Dendritic cell treated with granulocyte-macrophage colony-stimulating factor and Interleukin-4, amounts not matched to agents 40 ng/mL and 50 ng/mL, for 4 days (primary cell): ENCODE measurements at regions of chr18 and their contacts with region 1.

Region 1: DNA sequence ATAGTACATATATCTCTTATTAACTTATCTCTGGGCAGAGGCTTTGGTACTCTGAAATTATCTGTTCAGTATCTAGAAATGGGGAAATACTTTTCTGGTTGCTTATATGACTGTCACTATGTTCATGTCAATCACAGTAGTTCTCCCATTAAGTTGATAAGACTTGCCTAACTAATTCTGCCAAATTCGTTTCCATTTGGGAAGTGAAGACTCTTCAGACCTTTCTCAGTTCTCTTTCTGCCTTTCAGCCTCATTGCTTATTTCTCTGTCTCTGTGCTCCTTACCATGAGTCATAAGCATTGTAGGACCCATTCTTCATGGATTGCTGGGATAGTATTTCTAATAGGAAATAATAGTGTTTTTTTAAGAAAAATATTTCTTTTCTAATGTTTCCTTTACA is 113.5 kb downstream of the PHLPP1 start:
- H3K4me3 Mint-ChIP-seq: no peak overlapping the region
- H3K27ac Mint-ChIP-seq: peak overlapping the region; percentile 79
- H3K4me1 Mint-ChIP-seq: peaks cover 26% of the 10 kb centered on the region
- H3K27me3 Mint-ChIP-seq: no peaks in the 10 kb centered on the region

Region 2: DNA sequence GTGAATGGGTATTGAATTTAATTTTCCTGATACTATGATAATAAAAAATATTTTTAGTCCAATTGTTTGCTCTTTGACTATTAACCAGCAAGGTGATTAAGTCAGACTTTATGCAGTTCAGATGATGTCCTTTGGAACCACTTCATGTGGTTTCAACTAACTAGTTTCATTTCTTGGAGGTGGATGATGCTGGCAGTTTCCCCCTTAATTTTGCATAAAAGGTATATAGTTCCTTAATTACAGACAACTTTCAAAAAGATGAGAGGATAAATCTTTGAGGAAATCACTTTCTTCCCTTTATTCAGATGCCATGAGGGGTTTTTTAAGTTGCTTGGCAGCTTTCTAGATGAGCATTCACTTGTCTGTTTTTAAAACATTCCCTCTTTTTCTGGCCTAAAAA is 109.6 kb after region 1 on chr18:
- intact Hi-C with region 1: loop called (anchors 10 kb)
- H3K4me3 Mint-ChIP-seq: no peak overlapping the region
- H3K27ac Mint-ChIP-seq: no peak overlapping the region
- H3K4me1 Mint-ChIP-seq: peaks cover 42% of the 10 kb centered on the region
- H3K27me3 Mint-ChIP-seq: no peaks in the 10 kb centered on the region

Region 3: DNA sequence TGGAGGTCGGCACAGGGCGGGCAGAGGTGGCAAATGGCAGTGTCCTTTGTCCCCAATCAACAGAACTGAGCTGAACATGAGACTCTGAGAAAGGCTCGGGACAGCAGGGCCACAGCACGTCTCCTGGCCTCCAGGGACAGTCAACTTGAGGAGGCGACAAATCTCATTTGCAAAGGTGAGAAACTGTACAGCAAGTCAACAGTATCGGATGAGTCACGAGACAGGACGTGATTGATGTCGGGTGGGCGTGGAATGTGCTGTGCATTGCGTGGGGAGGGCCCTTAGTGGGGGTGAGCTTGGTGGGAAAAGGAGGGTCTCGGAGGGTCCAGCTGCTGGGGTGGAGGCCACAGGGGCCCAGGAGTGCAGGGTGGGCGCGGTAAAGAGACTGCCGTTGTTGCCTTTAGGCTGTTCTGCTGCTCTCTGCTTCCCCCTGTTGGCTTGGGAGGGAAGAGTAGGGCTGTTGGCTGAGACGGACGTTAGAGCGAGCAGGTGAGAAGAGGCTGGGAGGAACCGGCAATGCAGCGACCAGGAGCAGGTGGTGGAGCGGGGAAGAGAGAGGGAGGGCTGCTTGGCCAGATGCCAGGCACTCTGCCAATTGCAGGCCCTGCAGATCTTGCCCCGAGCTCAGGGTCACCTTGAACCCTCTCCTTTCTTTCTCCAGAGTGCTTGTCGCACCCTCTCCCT is 326.5 kb after region 1 on chr18:
- intact Hi-C with region 1: no loop called
- H3K4me3 Mint-ChIP-seq: peak overlapping the region; percentile 65
- H3K27ac Mint-ChIP-seq: peak overlapping the region; percentile 64
- H3K4me1 Mint-ChIP-seq: peaks cover 26% of the 10 kb centered on the region
- H3K27me3 Mint-ChIP-seq: peaks cover 14% of the 10 kb centered on the region